Esophagus muscularis mucosa (tissue), 4 donors: ENCODE measurements at regions of chr2 and their contacts with region 1.

Region 1: DNA sequence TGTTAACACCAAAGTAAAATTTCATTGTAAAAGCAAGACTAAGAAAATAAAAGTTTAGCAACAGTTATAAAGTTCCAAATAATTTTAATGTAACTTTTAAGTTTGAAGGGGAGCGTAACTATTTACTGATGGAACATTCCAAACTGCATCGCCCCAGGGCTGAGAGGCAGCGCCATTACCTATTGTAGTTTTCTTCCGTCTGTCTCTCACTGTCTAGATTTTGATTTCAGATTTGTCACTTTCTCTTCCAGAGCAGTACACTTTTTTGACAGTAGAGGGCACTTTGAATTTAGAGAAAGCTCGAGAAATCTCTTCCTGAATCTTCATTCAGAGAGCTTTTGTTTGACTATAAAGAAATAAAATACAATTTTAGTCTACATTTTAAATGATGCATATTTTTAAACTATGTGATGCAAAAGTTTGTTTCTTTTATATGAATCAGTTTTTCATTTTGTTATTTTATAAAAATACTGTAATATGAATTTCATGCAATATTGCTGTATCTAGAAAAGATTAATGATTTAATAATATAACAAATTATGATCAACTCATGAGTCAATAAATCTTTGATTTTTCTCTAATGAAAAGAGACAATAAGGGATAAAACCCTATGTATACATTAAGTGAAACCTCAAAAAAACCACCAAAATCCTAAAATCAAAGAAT is 389.8 kb downstream of the FIGN start:
- DNase-seq: no peak
- H3K4me3 ChIP-seq: no peak overlapping the region
- H3K27ac ChIP-seq: no peak overlapping the region
- H3K4me1 ChIP-seq: peaks cover 9 to 24% (median 18%) of the 10 kb centered on the region in 4 donors
- H3K27me3 ChIP-seq: no peaks in the 10 kb centered on the region
- CTCF ChIP-seq: peak; percentile 81 to 85 (median 83)
- EP300 ChIP-seq: no peak
- POLR2A ChIP-seq: no peak

Region 2: GRCh38 chr2:163735685-163736432 is 389.8 kb after region 1 on chr2 and contains the start of gene FIGN:
- intact Hi-C with region 1: loop called (anchors 5 kb)
- DNase-seq: peak; percentile 94
- H3K4me3 ChIP-seq: peak within 1 kb of the TSS; percentile 67 to 87 (median 80)
- H3K27ac ChIP-seq: peak within 1 kb of the TSS; percentile 93 to 98 (median 94)
- H3K4me1 ChIP-seq: peaks cover 0 to 33% (median 12%) of the 10 kb centered on the region in 4 donors
- H3K27me3 ChIP-seq: no peaks in the 10 kb centered on the region
- CTCF ChIP-seq: no peak
- EP300 ChIP-seq: no peak
- POLR2A ChIP-seq: no peak
- total RNA-seq, gene FIGN: 5.8 to 12.0 (median 11.1) TPM

Region 3: DNA sequence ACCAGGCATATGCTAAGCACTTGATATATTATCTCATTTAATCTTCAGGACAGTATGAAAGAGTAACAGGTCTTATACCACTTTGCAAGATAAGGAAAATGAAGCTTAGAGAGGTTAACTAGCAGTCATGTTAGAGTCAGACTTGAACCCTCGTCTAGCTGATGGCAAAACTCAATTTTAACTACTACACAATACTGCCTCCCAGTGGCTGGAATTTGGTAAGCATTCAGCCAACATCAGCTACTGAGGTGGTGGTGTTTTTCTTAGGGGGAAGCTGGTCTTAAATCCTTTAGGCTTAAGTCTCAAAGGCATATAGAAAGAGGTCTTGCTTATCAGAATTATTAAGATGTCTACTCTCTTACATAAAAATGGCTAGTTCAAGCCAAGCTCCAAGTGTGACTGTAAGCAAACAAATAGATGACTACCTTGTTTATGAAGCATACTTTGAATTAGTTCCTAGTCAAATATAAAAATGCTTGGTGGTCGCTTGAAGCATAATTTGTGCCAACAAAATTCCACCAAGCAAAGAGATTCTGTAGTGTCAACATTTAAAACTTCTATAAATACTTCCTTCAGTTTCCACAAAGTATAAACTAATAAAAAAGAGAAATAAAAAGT is 715.2 kb after region 1 on chr2:
- intact Hi-C with region 1: loop called (anchors 10 kb)
- DNase-seq: no peak
- H3K4me3 ChIP-seq: no peak overlapping the region
- H3K27ac ChIP-seq: no peak overlapping the region
- H3K4me1 ChIP-seq: peaks cover 0 to 3% (median 0%) of the 10 kb centered on the region in 4 donors
- H3K27me3 ChIP-seq: no peaks in the 10 kb centered on the region
- CTCF ChIP-seq: peak; percentile 44 to 58 (median 53)
- EP300 ChIP-seq: no peak
- POLR2A ChIP-seq: no peak

Region 4: GRCh38 chr2:164430166-164430783 is 1084.2 kb after region 1 on chr2:
- intact Hi-C with region 1: loop called (anchors 5 kb)
- DNase-seq: no peak
- H3K4me3 ChIP-seq: no peak overlapping the region
- H3K27ac ChIP-seq: no peak overlapping the region
- H3K4me1 ChIP-seq: no peaks in the 10 kb centered on the region
- H3K27me3 ChIP-seq: no peaks in the 10 kb centered on the region
- CTCF ChIP-seq: peak; percentile 45 to 60 (median 49)
- EP300 ChIP-seq: no peak
- POLR2A ChIP-seq: no peak